Ovary (tissue), 10 donors: ENCODE measurements at regions of chr3 and their contacts with region 1.

Region 1: DNA sequence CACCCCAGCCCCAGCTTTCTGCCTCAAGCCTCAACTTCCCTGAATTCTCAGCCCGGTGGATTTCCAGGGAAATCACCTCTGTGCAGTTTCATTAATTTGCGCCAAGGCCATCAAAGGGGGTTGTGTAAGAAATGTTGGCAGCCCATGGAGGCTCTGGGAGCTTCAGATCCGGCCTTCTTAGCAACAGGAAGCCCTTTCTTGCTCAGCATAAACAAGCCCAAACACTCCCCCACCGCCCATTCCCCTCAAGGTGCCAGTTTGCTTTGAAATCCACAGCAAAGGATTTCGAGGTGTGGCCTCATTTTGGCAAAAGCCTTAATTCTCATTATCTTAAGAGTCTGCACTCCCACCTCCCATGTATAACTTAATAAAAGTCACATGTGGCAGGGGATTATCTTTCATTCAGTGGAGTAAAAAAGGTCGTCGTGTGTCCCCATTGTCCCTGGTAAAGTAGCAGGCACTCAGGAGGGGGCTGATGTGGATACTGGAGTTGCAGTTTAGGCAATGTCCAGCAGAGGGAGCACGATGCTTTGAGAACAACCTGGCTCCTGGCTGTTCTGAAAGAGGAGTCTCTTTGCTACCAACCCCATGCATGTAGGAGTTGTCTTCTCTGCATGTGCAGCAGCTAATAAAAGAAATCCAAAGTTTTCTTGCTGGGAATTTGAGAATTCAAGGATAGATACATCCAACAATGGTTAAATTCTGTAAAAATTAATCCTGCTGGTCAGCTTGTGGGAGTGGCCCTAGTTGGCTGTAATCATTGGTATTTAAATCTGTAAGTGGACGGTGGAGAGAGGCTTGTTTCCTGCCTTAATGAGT is 39.5 kb downstream of the EBLN2 start:
- DNase-seq: peak; percentile 82 to 92 (median 84)
- H3K4me3 ChIP-seq: no peak overlapping the region
- H3K27ac ChIP-seq: no peak overlapping the region
- H3K4me1 ChIP-seq: peaks cover 2% of the 10 kb centered on the region
- H3K27me3 ChIP-seq: no peaks in the 10 kb centered on the region
- CTCF ChIP-seq: peak; percentile 63 to 94 (median 92)
- EP300 ChIP-seq: no peak
- POLR2A ChIP-seq: no peak

Region 2: GRCh38 chr3:73432023-73432705 is 331.2 kb after region 1 on chr3:
- intact Hi-C with region 1: loop called (anchors 5 to 10 kb)
- DNase-seq: no peak
- H3K4me3 ChIP-seq: no peak overlapping the region
- H3K27ac ChIP-seq: peak overlapping the region in 1 of 2 donors; percentile 50
- H3K4me1 ChIP-seq: peaks cover 18% of the 10 kb centered on the region
- H3K27me3 ChIP-seq: no peaks in the 10 kb centered on the region
- CTCF ChIP-seq: peak in 2 of 3 donors; percentile 51 to 52
- EP300 ChIP-seq: no peak
- POLR2A ChIP-seq: no peak

Region 3: GRCh38 chr3:73451306-73451944 is 350.5 kb after region 1 on chr3:
- intact Hi-C with region 1: loop called in 1 of 4 experiments (anchors 5 kb)
- DNase-seq: no peak
- H3K4me3 ChIP-seq: no peak overlapping the region
- H3K27ac ChIP-seq: no peak overlapping the region
- H3K4me1 ChIP-seq: peaks cover 13% of the 10 kb centered on the region
- H3K27me3 ChIP-seq: no peaks in the 10 kb centered on the region
- CTCF ChIP-seq: no peak
- EP300 ChIP-seq: no peak
- POLR2A ChIP-seq: no peak

Region 4: DNA sequence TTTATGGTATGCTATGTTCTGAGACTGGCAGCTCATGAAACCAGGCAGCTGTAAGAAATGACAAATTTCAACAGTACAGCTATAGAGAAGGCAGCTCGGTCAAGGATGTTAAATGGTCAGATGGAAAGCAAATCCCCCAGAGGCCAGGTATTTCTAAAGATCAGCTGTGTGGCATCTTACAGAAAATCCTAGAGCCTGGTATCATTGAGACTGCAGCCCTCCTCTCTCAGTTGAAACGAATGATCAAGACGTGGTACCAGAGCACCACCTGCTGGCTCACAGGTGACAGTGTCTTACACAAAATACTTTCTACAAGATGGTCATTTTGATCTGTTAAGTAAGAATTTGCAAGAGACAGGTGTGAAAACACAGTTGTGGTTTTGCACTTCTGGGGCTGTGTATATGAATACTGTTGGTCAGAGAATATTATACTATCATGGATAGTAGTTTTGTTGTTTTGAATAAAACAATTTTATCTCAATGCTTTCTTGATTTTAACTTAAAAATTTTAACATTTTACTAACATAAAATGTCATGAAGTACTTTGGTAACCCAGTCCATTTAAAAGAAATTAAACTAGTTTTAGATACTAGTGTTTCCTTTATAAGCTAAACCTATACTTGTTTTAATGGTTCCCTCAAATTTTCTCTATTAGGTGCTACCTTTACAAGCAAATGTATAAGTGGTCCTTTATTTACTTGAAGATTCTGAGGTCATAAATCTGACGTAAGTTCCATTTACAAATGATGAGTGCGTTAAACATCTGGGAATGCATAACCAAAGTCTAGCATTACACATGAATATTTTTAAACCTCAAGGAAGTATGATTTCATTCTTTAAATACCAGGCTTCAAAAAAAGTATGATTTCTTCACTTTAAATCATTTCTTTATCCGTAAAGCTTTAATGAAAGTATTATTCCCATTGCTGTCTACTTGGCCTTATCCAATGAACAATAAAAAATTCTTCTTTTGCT is 401.9 kb after region 1 on chr3:
- intact Hi-C with region 1: loop called (anchors 5 kb)
- DNase-seq: peak; percentile 76 to 86 (median 82)
- H3K4me3 ChIP-seq: no peak overlapping the region
- H3K27ac ChIP-seq: peak overlapping the region in 1 of 2 donors; percentile 38
- H3K4me1 ChIP-seq: peaks cover 15% of the 10 kb centered on the region
- H3K27me3 ChIP-seq: no peaks in the 10 kb centered on the region
- CTCF ChIP-seq: peak; percentile 75 to 85 (median 79)
- EP300 ChIP-seq: no peak
- POLR2A ChIP-seq: no peak

Region 5: DNA sequence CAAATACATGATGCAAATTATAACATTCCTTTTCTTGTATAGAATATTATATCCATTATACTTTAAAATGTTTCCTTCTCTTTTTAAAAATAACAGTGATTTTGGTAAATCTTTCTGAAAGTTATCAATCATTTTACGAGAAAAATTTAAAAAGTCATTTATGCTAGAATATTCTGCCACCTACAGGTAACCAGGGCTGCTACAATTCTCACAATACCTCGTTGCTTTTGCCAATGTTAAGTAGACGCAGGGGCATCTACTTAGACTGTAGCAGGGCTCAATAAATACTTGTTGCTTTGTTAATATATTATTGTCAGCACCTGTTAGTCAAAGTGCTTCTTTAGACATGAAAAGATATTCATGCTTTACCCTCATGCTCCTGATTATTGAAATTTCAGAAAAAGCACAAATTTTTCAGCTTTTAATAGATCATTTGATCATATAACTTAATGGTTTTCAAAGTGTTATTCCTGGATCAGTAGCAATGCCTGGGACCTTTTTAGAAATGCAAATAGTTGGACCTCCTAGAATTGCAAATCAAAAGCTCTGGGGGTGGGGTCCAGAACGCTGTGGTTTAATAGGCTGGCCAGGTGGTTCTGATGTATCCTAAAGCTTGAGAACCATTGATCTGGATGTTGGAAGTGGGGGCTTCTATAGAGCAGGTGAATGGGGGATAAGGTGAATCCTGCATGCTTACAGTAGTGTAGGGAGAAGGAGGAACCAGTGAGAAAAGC is 747.4 kb after region 1 on chr3:
- intact Hi-C with region 1: loop called in 1 of 4 experiments (anchors 10 kb)
- DNase-seq: no peak
- H3K4me3 ChIP-seq: no peak overlapping the region
- H3K27ac ChIP-seq: no peak overlapping the region
- H3K4me1 ChIP-seq: no peaks in the 10 kb centered on the region
- H3K27me3 ChIP-seq: no peaks in the 10 kb centered on the region
- CTCF ChIP-seq: peak; percentile 42 to 75 (median 71)
- EP300 ChIP-seq: no peak
- POLR2A ChIP-seq: no peak